WTC11 (cell line): ENCODE measurements at regions of chr2 and their contacts with region 1.

Region 1: DNA sequence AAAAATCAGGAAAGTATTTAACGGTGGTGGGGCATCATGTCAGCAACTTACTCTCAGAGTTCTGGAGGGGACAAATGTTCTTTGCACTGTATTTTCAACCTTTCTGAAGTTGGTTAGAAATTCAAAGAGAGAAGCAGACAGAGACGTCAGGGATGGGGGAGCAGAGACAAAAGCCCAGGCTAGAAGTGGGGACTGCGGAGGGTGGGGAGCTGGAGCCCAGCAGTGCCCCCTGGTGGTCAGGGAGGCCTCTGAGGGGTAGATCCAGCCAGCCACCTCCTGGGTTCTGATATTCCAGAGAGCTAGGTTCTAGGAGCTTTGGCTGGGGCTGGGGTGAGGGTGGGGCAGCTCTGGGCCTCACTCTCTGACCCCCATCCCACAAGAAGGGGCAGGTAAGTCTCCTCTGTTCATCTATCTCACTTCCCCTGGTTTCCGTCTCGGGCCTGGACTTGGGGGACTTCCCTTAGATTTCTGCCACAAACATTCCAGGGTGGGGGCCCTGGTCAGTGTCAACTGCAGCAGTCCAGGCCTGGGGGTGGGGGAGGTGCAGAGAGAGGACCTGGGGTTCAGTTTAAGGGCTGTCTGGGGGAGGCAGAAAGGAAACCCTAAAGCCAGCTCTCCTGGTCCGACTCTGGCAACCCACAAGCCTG is 8.9 kb downstream of the TNS1 start:
- DNase-seq: peak; percentile 85
- ATAC-seq: peak; percentile 91
- H3K4me3 Mint-ChIP-seq: no peak overlapping the region
- H3K27ac Mint-ChIP-seq: no peak overlapping the region
- H3K4me1 Mint-ChIP-seq: peaks cover 16% of the 10 kb centered on the region
- H3K27me3 Mint-ChIP-seq: peaks cover 4% of the 10 kb centered on the region; the same call in 1 of the 2 replicates
- CTCF ChIP-seq: peak; percentile 90

Region 2: GRCh38 chr2:217858519-217859491 is 135.1 kb before region 1 on chr2:
- CTCF ChIA-PET with region 1: interaction called, 17 read pairs
- POLR2A ChIA-PET with region 1: no interaction called
- DNase-seq: no peak
- ATAC-seq: peak; percentile 25
- H3K4me3 Mint-ChIP-seq: no peak overlapping the region
- H3K27ac Mint-ChIP-seq: no peak overlapping the region
- H3K4me1 Mint-ChIP-seq: peaks cover 33% of the 10 kb centered on the region
- H3K27me3 Mint-ChIP-seq: no peaks in the 10 kb centered on the region
- CTCF ChIP-seq: no peak

Region 3: GRCh38 chr2:217918308-217919024 is 75.5 kb before region 1 on chr2:
- CTCF ChIA-PET with region 1: interaction called, 20 read pairs
- POLR2A ChIA-PET with region 1: no interaction called
- DNase-seq: peak; percentile 60
- ATAC-seq: peak; percentile 67
- H3K4me3 Mint-ChIP-seq: no peak overlapping the region
- H3K27ac Mint-ChIP-seq: no peak overlapping the region
- H3K4me1 Mint-ChIP-seq: peaks cover 55% of the 10 kb centered on the region
- H3K27me3 Mint-ChIP-seq: no peaks in the 10 kb centered on the region
- CTCF ChIP-seq: no peak

Region 4: GRCh38 chr2:217951513-217952164 is 42.3 kb before region 1 on chr2:
- CTCF ChIA-PET with region 1: interaction called, 27 read pairs
- POLR2A ChIA-PET with region 1: no interaction called
- DNase-seq: no peak
- ATAC-seq: peak; percentile 36
- H3K4me3 Mint-ChIP-seq: no peak overlapping the region
- H3K27ac Mint-ChIP-seq: no peak overlapping the region
- H3K4me1 Mint-ChIP-seq: peaks cover 32% of the 10 kb centered on the region
- H3K27me3 Mint-ChIP-seq: no peaks in the 10 kb centered on the region
- CTCF ChIP-seq: no peak

Region 5: DNA sequence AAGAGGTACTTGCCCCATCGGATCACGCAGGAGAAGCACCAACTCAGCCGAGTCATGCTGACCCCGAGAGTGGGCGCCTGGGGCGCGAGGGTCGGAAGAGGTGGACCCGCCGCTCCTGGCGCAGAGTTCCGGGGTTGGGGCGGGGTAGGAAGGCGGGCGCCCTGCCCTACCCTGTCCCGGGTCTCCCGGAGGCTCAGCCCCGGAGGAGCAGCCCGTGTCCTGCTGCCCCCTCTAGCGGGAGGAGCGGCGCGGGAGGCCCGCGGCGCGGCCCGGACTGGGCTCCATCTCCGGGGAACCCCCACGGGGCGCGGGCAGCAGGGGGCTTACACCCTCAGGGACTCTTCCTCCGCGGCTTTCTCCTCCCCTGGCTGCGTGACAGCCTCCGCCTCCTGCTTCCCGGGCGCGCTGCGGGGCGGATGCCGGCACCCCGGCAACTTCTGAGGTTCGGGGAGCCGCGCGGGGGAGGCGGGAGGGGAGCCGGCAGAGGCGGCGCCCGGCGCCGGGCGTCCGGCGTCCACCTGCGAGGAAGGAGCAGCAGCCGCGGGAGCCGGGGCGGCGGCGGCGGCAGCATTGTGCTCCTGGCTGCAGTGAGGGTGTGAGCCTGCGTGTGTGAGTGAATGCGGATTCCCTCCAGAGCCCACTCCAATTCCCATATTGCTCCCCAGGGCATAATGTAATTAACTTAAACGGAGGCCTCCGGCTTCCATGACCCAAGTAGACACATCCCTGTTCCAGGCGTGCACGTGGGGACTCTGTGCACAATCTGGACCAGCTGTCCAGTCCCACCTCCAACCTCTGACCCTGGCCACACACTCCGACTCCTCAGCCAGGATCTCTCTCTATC is 16.4 kb after region 1 on chr2:
- CTCF ChIA-PET with region 1: interaction called, 78 read pairs
- POLR2A ChIA-PET with region 1: no interaction called
- DNase-seq: no peak
- ATAC-seq: peak; percentile 62
- H3K4me3 Mint-ChIP-seq: peak overlapping the region; percentile 80
- H3K27ac Mint-ChIP-seq: no peak overlapping the region
- H3K4me1 Mint-ChIP-seq: peaks cover 36% of the 10 kb centered on the region
- H3K27me3 Mint-ChIP-seq: peaks cover 50% of the 10 kb centered on the region
- CTCF ChIP-seq: no peak

Region 6: DNA sequence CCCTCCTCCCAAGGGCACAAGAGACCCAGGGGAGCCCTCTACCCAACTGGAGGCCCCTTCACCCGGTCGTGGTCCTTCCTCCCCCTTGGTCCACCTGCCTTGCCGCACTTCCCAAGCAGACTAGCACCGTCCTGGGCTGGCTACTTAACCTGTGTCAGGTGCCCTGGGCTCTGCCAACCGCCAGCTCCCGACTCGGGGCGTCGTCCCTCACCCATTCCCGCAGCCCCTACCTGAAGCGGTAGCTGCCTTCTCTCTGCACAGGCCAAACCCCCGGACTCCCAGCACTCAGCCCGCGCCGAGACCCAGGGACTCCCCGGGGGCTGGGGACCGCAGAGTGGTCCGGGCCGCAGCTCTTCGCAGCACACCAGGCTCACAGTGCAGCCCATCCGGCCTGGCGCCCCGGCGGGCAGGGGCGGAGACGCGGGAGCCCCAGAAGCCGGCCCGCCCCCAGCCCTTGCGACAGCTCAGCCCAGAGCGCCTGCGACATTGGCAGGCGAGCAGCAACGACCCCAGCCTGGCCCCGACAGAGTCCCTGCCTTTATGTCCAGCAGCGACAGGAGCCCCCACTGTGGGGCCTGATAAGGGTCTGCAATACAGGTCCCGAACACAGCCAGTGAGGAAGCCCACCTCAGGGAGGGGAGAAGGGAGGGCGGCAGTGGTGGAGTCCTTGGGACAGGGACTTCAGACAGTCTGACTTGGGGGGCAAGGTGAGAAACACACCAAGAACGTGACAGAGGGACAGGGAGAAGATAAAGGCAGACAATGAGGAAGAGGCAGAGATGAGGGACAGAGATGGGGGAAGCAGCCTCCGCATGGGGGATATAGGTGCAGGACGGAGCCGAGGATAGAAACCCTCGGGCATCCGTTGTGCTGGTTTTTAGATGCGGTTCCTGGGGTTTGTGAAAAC is 39.9 kb after region 1 on chr2:
- CTCF ChIA-PET with region 1: interaction called, 65 read pairs
- POLR2A ChIA-PET with region 1: no interaction called
- DNase-seq: peak; percentile 54
- ATAC-seq: peak; percentile 46
- H3K4me3 Mint-ChIP-seq: peak overlapping the region; percentile 68
- H3K27ac Mint-ChIP-seq: no peak overlapping the region
- H3K4me1 Mint-ChIP-seq: peaks cover 2% of the 10 kb centered on the region; the same call in 1 of the 2 replicates
- H3K27me3 Mint-ChIP-seq: peaks cover 30% of the 10 kb centered on the region
- CTCF ChIP-seq: no peak